ENCODE measurements at regions of chr5 and their contacts with region 1.

Region 1: DNA sequence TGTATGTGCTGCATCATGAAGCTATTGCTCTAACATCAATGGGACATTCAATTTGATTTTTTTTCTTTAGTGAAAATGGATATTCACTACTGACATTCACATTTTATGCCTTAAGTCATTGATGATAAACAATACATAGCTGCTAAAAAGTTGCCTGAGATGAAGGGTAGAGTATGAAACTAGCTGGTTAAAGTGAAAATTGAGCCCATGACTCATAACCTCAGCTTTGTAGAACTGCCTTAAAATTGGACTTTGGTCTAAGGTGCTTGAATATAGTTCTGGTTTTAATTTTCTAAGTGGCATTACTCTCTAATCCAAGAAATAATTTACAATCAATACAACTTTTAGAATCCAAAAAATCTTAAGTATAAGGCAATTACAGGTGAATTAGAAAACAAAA is 740.4 kb upstream of the RIOK2 start:
- DNase-seq: no peak
- ATAC-seq: peak; percentile 85
- H3K4me3 ChIP-seq: no peak overlapping the region
- H3K27ac ChIP-seq: no peak overlapping the region
- H3K4me1 ChIP-seq: no peaks in the 10 kb centered on the region
- H3K27me3 ChIP-seq: no peaks in the 10 kb centered on the region
- CTCF ChIP-seq: no peak
- EP300 ChIP-seq: 0 out of 4 replicates have a peak, but pooled peaks have one; percentile 1 to 4
- POLR2A ChIP-seq: no peak
- RAD21 ChIP-seq: no peak

Region 2: GRCh38 chr5:97547999-97548738 is 375.3 kb before region 1 on chr5:
- CTCF ChIA-PET with region 1: no interaction called
- POLR2A ChIA-PET with region 1: no interaction called
- RAD21 ChIA-PET with region 1: interaction called, 3 read pairs
- SMC1A ChIA-PET with region 1: interaction called, 4 read pairs
- in situ Hi-C with region 1: no loop called
- intact Hi-C with region 1: loop called (anchors 10 kb)
- DNase-seq: peak; percentile 42
- ATAC-seq: peak; percentile 85
- H3K4me3 ChIP-seq: no peak overlapping the region
- H3K27ac ChIP-seq: peak overlapping the region; percentile 45; the same call in 1 of the 2 replicates
- H3K4me1 ChIP-seq: peaks cover 11% of the 10 kb centered on the region
- H3K27me3 ChIP-seq: no peaks in the 10 kb centered on the region
- CTCF ChIP-seq: no peak
- EP300 ChIP-seq: peak; percentile 23 to 68; a peak in 2 of 4 replicates
- POLR2A ChIP-seq: no peak
- RAD21 ChIP-seq: no peak

Region 3: GRCh38 chr5:97797994-97798451 is 125.5 kb before region 1 on chr5:
- CTCF ChIA-PET with region 1: no interaction called
- POLR2A ChIA-PET with region 1: no interaction called
- RAD21 ChIA-PET with region 1: interaction called, 23 read pairs
- SMC1A ChIA-PET with region 1: interaction called, 5 read pairs
- in situ Hi-C with region 1: no loop called
- intact Hi-C with region 1: no loop called
- DNase-seq: no peak
- ATAC-seq: peak; percentile 69
- H3K4me3 ChIP-seq: no peak overlapping the region
- H3K27ac ChIP-seq: no peak overlapping the region
- H3K4me1 ChIP-seq: no peaks in the 10 kb centered on the region
- H3K27me3 ChIP-seq: no peaks in the 10 kb centered on the region
- CTCF ChIP-seq: no peak
- EP300 ChIP-seq: no peak
- POLR2A ChIP-seq: no peak
- RAD21 ChIP-seq: no peak

Region 4: GRCh38 chr5:97838214-97838613 is 85.3 kb before region 1 on chr5:
- CTCF ChIA-PET with region 1: no interaction called
- POLR2A ChIA-PET with region 1: no interaction called
- RAD21 ChIA-PET with region 1: interaction called, 8 read pairs
- SMC1A ChIA-PET with region 1: interaction called, 6 read pairs
- in situ Hi-C with region 1: no loop called
- intact Hi-C with region 1: loop called (anchors 5 kb)
- DNase-seq: peak; percentile 58
- ATAC-seq: peak; percentile 96
- H3K4me3 ChIP-seq: no peak overlapping the region
- H3K27ac ChIP-seq: no peak overlapping the region
- H3K4me1 ChIP-seq: no peaks in the 10 kb centered on the region
- H3K27me3 ChIP-seq: no peaks in the 10 kb centered on the region
- CTCF ChIP-seq: no peak
- EP300 ChIP-seq: peak; percentile 84 to 93
- POLR2A ChIP-seq: no peak
- RAD21 ChIP-seq: no peak

Region 5: GRCh38 chr5:97888439-97888838 is 35.1 kb before region 1 on chr5:
- CTCF ChIA-PET with region 1: interaction called, 3 read pairs
- POLR2A ChIA-PET with region 1: no interaction called
- RAD21 ChIA-PET with region 1: no interaction called
- SMC1A ChIA-PET with region 1: interaction called, 10 read pairs
- in situ Hi-C with region 1: no loop called
- intact Hi-C with region 1: no loop called
- DNase-seq: peak; percentile 51
- ATAC-seq: peak; percentile 97
- H3K4me3 ChIP-seq: no peak overlapping the region
- H3K27ac ChIP-seq: no peak overlapping the region
- H3K4me1 ChIP-seq: no peaks in the 10 kb centered on the region
- H3K27me3 ChIP-seq: no peaks in the 10 kb centered on the region
- CTCF ChIP-seq: no peak
- EP300 ChIP-seq: peak; percentile 23 to 64; a peak in 1 of 4 replicates
- POLR2A ChIP-seq: no peak
- RAD21 ChIP-seq: no peak

Region 6: DNA sequence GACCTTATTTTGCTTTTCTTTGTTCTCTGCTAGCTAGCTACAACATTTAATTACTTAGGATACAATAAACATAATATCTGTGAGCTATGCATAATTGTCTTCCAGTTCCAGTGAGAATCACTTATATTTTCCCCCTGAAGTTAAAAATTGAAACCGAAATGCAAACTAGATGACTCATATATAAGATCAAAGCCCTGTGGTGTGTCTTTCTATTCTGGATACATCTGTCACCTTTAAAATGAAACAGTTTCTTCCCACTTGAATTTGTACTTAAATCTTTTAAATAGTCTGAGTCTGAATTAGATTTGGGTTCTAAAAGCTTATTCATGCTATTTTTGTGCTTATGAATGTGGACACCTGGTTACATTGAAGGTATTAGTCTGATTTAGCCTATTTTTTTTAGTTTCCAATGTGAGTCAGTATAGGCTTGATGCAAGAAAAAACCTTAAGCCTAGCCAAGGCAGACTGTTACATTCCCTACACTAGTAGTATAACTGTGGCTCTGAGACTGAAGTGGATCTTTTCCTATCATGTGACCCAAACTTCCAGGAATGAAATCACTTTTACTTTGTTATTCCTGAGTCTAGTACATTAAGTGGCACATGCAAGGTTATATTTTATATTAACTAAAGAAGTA is 146.5 kb after region 1 on chr5:
- CTCF ChIA-PET with region 1: no interaction called
- POLR2A ChIA-PET with region 1: interaction called, 3 read pairs
- RAD21 ChIA-PET with region 1: interaction called, 5 read pairs
- SMC1A ChIA-PET with region 1: interaction called, 10 read pairs
- in situ Hi-C with region 1: no loop called
- intact Hi-C with region 1: no loop called
- DNase-seq: no peak
- ATAC-seq: peak; percentile 95
- H3K4me3 ChIP-seq: no peak overlapping the region
- H3K27ac ChIP-seq: no peak overlapping the region
- H3K4me1 ChIP-seq: no peaks in the 10 kb centered on the region
- H3K27me3 ChIP-seq: no peaks in the 10 kb centered on the region
- CTCF ChIP-seq: no peak
- EP300 ChIP-seq: no peak
- POLR2A ChIP-seq: no peak
- RAD21 ChIP-seq: no peak

Measured in GM12878 (cell line).